ENCODE measurements at regions of chr18 and their contacts with region 1.

Region 1: DNA sequence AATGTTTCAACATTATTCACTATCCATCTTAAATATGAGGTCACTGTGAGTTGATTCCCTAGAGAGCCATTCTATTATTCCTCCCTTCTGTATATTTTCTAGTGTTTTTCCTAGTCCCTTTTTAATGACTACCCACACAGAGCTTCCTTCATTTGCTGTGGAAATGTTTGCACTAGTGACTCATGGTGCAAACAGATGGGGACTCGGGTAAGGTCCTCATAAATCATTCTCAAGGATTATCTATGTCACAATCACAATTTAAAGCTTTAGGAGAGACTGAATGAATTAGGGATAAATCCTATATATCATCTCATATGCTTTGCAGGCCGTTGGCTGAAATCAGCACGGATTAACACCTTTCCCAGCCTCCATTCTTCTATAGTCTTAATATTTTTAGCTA is 159.6 kb downstream of the DCC start:
- DNase-seq: peak; percentile 94
- H3K4me3 ChIP-seq: no peak overlapping the region
- H3K27ac ChIP-seq: peak overlapping the region; percentile 54
- H3K4me1 ChIP-seq: peaks cover 59% of the 10 kb centered on the region
- H3K27me3 ChIP-seq: no peaks in the 10 kb centered on the region
- CTCF ChIP-seq: no peak

Region 2: DNA sequence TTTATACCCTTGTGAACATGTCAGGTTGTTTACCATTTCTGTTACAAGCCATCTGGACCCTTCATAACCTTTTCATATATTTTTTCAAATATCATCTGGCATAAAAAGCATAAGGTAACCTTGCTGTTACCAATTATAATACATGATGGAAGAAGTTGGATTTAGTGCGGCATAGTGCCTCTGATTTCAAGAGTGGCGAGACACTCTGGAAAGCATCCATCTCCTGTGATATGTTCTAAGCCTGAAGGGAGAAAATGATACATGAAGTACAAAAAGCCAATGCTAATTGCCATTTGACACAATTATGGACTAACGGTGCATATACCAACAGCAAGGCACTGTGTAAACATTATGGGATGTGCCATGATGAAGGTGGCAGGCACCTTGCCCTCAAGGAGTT is 84.5 kb before region 1 on chr18:
- CTCF ChIA-PET with region 1: no interaction called
- POLR2A ChIA-PET with region 1: no interaction called
- intact Hi-C with region 1: no loop called
- DNase-seq: no peak
- H3K4me3 ChIP-seq: no peak overlapping the region
- H3K27ac ChIP-seq: no peak overlapping the region
- H3K4me1 ChIP-seq: peaks cover 32% of the 10 kb centered on the region
- H3K27me3 ChIP-seq: no peaks in the 10 kb centered on the region
- CTCF ChIP-seq: no peak

Region 3: DNA sequence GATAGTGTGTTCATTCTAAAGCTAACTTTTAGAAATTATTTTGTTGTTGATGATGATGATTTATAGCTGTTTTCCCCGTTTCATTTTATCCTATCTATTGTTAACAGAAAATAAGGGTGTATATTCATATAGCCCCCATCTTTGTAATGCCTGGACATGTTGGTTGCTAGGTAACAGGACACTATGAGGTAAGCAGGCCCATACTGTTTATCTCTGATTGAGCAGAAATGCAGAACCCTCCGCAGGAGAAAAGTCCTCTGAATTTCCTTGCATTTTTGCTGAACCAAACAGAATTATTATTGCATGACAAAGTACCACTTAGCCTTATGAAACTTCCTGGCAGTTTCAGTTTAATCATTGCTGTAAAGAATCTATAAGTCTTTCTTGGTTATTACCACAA is 179.7 kb after region 1 on chr18:
- CTCF ChIA-PET with region 1: no interaction called
- POLR2A ChIA-PET with region 1: no interaction called
- intact Hi-C with region 1: loop called (anchors 5 kb)
- DNase-seq: peak; percentile 73
- H3K4me3 ChIP-seq: no peak overlapping the region
- H3K27ac ChIP-seq: peak overlapping the region; percentile 67
- H3K4me1 ChIP-seq: peaks cover 77% of the 10 kb centered on the region
- H3K27me3 ChIP-seq: no peaks in the 10 kb centered on the region
- CTCF ChIP-seq: no peak

Measured in A673 (cell line).